Dendritic cell treated with granulocyte-macrophage colony-stimulating factor and Interleukin-4, amounts not matched to agents 40 ng/mL and 50 ng/mL, for 4 days (primary cell): ENCODE measurements at regions of chr6 and their contacts with region 1.

Region 1: DNA sequence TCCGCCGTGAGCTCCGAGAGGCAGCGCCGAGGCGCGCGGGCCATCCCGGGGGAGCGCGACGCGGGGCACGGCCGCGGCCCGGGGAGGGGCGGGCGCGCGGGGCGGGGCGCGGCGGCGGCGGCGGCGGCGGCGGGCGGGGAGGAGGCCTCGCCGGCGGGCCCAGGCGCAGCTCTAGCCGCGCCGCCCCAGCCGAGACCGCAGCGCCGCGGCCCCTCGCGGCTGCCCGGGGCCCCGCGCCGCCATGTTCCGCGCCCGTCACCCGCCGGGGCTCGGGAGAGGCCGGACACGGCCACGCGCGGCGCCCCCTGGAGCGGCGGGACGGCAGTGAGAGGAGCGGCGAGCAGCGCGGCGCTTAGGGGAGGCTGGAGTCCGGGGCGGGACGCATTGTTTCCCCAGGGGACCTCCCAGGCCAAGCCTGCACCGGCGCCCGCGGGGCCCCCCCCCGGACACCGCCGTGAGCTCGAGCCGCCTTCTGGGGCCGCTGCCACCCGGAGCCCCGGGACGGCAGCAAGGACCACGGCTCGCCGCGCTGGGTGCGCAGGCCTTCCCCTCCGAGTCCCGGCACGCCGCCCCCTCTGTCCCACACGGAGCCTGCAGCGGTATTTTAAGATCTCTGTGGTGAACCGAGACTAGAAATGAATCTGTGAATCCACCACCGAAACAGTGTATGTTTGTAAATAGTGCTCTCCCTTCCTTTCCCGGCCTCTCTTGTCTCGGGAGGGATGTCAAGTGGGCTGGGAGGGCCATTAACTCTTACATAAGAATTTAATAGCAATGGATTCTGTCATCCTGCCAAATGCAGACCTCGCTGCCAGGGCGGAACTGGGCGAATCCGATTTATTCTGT is at the start of gene KIF13A:
- H3K4me3 Mint-ChIP-seq: peak within 1 kb of the TSS; percentile 88
- H3K27ac Mint-ChIP-seq: peak within 1 kb of the TSS; percentile 87
- H3K4me1 Mint-ChIP-seq: peaks cover 59% of the 10 kb centered on the region
- H3K27me3 Mint-ChIP-seq: peaks cover 3% of the 10 kb centered on the region

Region 2: DNA sequence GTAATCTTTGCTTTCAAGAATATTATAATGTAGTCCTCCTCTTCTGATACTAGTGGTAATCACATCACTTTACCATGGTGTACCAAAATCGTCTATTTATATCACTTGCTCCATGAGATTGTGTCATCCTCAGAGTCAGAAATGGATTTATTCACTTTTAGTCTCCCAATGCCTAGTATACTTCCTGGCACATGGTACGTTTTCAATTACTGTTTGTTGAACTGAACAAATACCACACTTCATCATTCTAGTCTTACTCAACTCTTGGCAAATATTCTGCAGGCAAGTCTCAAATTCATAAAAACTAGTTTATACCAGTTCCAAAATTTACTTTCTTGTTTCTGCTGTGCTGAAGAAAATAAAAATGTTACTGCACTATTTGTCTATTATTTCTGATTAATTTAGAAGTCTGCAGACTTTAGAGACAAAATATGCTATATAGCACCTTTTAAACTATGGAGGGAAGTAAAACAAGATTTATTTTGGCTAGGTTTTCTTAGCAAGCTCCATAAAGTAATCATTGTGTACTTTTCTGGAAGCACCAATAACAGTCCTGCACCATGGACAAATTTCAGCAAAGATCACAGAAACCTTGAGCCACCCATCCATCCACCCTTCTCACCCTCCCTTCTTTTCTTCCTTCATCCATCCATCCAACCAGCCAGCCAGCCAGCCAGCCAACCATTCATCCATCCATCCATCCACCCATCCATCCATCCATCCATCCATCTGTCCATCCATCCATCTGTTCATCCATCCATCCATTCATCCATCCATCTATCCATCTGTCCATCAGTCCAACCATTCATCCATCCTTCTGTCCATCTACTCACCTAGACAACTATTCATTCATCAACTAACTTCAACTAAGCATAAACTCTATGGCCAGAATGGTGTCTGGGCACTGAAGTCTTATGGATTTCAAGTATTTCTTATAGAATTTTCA is 988.0 kb before region 1 on chr6:
- intact Hi-C with region 1: no loop called
- H3K4me3 Mint-ChIP-seq: no peak overlapping the region
- H3K27ac Mint-ChIP-seq: no peak overlapping the region
- H3K4me1 Mint-ChIP-seq: no peaks in the 10 kb centered on the region
- H3K27me3 Mint-ChIP-seq: peaks cover 28% of the 10 kb centered on the region

Region 3: DNA sequence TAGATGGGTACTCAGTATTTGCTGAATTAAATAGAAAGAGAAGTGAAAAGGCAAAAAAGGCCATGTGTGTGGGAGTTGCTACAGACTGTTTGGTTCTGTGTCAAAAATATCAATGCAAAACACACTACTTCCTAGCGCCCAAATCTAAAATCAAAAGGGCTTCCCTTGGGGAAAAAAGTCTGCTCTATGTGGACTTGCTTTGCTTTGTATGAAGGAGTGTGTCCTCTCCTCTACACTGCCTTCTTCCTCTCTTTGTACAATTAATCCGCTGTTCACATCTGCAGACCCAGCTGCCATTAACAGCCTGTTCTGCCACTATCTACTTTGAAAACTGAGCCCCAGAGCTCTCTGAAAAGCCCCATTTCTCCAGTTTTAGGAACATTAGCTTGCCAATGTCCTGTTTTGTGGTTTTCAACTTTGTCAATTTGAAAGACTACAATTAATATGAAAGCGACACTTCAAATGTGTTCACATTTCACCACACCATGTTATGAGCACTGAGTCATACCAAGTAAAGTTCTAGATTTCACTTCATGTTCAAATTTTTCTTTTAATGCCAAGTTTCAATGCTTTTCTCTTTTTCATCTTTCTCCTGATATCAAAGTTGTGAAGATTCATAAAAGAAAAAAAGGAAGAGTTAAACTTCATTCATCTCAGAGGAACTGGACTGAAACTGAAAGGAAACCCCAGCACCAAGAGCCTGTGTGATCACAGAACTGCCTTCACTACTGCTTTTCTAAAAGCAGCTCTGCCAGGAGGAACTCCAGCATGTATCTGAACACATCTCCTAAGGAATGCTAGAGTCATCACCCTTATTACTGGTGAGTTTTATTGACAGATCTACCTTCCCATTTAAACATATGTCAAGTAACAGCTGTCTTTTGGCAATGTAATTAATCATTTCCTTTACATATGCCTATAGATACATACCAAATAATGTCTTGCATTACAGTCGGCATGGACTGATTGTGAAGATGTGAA is 103.0 kb before region 1 on chr6:
- intact Hi-C with region 1: loop called (anchors 5 kb)
- H3K4me3 Mint-ChIP-seq: peak overlapping the region; percentile 61
- H3K27ac Mint-ChIP-seq: peak overlapping the region; percentile 88
- H3K4me1 Mint-ChIP-seq: peaks cover 64% of the 10 kb centered on the region
- H3K27me3 Mint-ChIP-seq: no peaks in the 10 kb centered on the region

Region 4: GRCh38 chr6:17932330-17932852 is 55.4 kb before region 1 on chr6:
- intact Hi-C with region 1: loop called (anchors 10 kb)
- H3K4me3 Mint-ChIP-seq: peak overlapping the region; percentile 55
- H3K27ac Mint-ChIP-seq: peak overlapping the region; percentile 87
- H3K4me1 Mint-ChIP-seq: peaks cover 53% of the 10 kb centered on the region
- H3K27me3 Mint-ChIP-seq: no peaks in the 10 kb centered on the region

Region 5: GRCh38 chr6:18122124-18123093 is 134.6 kb after region 1 on chr6 and contains the start of gene NHLRC1:
- intact Hi-C with region 1: loop called (anchors 1 kb)
- H3K4me3 Mint-ChIP-seq: peak within 1 kb of the TSS; percentile 72
- H3K27ac Mint-ChIP-seq: peak within 1 kb of the TSS; percentile 84
- H3K4me1 Mint-ChIP-seq: peaks cover 15% of the 10 kb centered on the region
- H3K27me3 Mint-ChIP-seq: no peaks in the 10 kb centered on the region

Region 6: DNA sequence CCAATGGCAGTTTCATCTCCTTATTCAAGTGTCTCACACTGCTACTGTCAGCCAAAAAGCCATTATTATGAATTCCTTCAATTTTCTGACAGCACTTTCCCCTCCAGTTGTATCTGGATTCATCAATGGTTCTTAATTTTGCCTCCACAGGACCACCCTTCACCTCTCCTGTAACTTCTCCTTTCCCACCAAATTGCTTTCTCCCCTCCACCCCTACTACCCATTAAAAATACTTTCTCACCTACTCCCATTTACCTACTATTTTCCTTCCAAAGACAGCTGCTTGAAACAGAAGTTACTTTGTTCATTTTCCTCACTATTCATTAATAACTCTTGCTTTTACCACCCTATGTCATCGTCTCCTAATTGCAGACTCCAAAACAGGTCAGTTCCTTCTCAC is 246.8 kb after region 1 on chr6:
- intact Hi-C with region 1: no loop called
- H3K4me3 Mint-ChIP-seq: no peak overlapping the region
- H3K27ac Mint-ChIP-seq: no peak overlapping the region
- H3K4me1 Mint-ChIP-seq: peaks cover 31% of the 10 kb centered on the region
- H3K27me3 Mint-ChIP-seq: no peaks in the 10 kb centered on the region